ENCODE measurements at regions of chr9 and their contacts with region 1.

Region 1: DNA sequence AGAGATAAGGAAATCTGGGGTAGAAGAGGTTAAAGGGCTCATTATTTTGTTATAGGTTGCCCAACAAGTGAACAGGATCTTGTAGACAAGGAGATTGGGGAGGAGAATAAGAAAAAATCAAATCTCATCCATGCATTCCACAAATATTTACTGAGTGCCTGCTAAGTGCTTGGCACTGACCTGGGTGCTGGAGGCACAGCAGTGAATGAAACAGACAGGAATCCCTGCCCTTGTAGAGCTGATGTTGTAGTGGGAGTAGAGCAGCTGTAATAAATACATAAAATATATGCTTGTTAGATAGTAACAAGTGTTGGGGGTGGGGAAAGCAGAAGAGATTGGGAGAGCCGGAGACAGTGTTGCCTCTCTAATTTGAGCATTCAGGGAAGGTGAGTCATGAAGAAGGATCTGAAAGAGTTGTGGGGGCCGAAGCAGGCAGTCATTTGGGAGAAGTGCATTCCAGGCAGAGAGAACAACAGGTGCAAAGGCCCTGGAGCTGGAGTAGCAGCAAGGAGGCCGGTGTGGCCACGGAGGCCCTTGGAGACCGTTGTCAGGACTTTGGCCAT is 97.8 kb downstream of the ZNF618 start:
- DNase-seq: no peak
- H3K4me3 Mint-ChIP-seq: no peak overlapping the region
- H3K27ac Mint-ChIP-seq: no peak overlapping the region
- H3K4me1 Mint-ChIP-seq: no peaks in the 10 kb centered on the region
- H3K27me3 Mint-ChIP-seq: no peaks in the 10 kb centered on the region

Region 2: DNA sequence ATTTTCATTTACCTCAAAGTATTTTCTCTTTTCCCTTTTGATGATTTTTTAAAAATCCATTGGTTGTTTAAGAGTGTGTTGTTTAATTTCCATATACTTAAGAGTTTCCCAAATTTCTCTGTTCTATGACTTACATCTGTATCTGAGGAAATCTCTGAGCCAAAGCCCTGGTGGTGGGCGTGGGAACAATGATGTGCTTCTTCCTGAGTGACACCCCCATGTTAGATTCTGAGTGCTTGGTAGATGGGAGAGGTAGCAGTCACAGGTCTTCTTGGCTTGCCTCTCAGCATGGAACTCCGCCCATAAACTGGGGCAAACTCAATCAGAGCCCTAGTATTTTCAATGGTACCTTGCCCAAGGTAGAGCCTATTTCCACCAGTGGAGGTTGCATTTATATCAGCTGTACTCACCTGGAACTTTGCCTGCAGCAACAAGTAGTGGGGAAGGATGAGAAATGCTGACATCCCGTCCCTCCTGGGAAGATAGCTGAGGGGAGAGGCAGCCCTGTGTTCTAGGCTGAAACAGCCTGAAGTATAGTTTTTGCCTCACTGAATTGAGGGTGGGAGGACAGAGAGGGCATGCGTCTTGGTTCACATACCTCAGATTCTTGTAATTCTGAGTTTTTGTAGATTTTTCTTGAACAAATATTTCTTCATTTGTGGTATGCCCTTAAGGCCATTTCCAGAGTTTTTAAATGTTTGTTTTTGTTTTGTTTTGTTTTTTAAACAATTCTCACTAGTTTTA is 537.0 kb before region 1 on chr9:
- CTCF ChIA-PET with region 1: no interaction called
- POLR2A ChIA-PET with region 1: interaction called, 11 read pairs
- DNase-seq: no peak
- H3K4me3 Mint-ChIP-seq: no peak overlapping the region
- H3K27ac Mint-ChIP-seq: no peak overlapping the region
- H3K4me1 Mint-ChIP-seq: no peaks in the 10 kb centered on the region
- H3K27me3 Mint-ChIP-seq: peaks cover 13% of the 10 kb centered on the region

Region 3: DNA sequence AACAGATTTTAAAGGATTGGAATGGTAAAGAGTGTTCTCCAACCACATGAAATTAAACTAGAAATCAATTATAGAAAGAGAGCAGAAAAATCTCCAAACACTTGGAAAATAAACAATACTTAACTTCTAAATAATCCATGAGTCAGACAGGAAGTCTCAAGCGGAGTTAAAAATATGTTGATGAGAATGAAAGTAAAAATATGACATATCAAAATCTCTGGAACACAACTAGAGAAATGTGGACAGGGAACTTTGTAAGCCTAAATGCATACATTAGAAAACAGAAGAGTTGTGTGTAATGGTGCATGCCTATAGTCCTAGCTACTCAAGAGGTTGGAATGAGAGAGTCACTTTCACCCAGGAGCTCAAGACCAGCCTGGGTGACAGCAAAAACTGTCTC is 145.7 kb before region 1 on chr9:
- CTCF ChIA-PET with region 1: no interaction called
- POLR2A ChIA-PET with region 1: no interaction called
- DNase-seq: no peak
- H3K4me3 Mint-ChIP-seq: no peak overlapping the region
- H3K27ac Mint-ChIP-seq: no peak overlapping the region
- H3K4me1 Mint-ChIP-seq: peaks cover 6% of the 10 kb centered on the region
- H3K27me3 Mint-ChIP-seq: peaks cover 22% of the 10 kb centered on the region

Region 4: DNA sequence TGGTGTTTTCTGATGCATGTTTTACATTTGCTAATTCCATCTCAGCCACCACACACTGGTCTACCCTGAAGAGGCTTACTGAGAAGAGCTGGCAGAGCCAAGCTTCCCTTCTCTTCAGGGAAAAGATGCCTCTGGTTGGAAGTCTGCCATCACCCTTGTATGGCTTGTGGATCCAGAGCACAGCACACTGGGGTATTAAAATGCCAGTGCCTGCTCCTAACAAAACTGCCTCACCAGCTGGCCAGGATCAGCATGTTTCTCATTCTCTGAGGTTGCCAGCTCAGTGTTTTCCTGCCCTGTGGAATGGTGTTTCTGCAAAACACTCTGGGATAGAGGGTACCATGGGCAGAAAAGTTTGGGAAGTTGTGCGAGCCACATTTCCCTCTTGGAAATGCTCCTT is 129.5 kb before region 1 on chr9:
- CTCF ChIA-PET with region 1: no interaction called
- POLR2A ChIA-PET with region 1: no interaction called
- DNase-seq: no peak
- H3K4me3 Mint-ChIP-seq: no peak overlapping the region
- H3K27ac Mint-ChIP-seq: no peak overlapping the region
- H3K4me1 Mint-ChIP-seq: no peaks in the 10 kb centered on the region
- H3K27me3 Mint-ChIP-seq: peaks cover 7% of the 10 kb centered on the region